ENCODE measurements at regions of chr1 and their contacts with region 1.

Region 1: GRCh38 chr1:87292684-87293493 is 35.8 kb upstream of the LMO4 start:
- DNase-seq: no peak
- H3K4me3 ChIP-seq: no peak overlapping the region
- H3K27ac ChIP-seq: no peak overlapping the region
- H3K4me1 ChIP-seq: no peaks in the 10 kb centered on the region
- H3K27me3 ChIP-seq: no peaks in the 10 kb centered on the region
- CTCF ChIP-seq: peak; percentile 64 to 79 (median 75)
- POLR2A ChIP-seq: no peak

Region 2: DNA sequence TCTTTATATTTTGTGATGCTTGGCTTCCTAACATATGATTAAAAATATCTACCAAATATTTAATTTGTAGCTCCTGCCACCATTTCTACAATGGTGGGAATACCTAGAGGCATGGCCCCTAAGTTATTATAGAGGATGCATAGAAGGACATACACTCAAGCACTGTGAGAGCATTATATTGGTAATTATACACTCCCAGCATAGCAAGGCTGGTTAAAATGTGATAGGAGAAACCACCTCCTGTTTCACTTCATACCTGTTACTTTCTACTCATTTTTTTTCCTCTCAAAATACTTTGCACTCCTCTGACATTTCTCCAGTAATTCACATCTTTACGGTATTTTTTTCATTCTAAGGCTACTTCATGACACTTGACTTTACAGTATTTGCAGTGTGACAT is 285.6 kb before region 1 on chr1:
- intact Hi-C with region 1: no loop called
- DNase-seq: no peak
- H3K4me3 ChIP-seq: no peak overlapping the region
- H3K27ac ChIP-seq: no peak overlapping the region
- H3K4me1 ChIP-seq: no peaks in the 10 kb centered on the region
- H3K27me3 ChIP-seq: no peaks in the 10 kb centered on the region
- CTCF ChIP-seq: no peak
- POLR2A ChIP-seq: no peak

Region 3: GRCh38 chr1:87592156-87592555 is 299.3 kb after region 1 on chr1:
- intact Hi-C with region 1: no loop called
- DNase-seq: no peak
- H3K4me3 ChIP-seq: no peak overlapping the region
- H3K27ac ChIP-seq: no peak overlapping the region
- H3K4me1 ChIP-seq: peaks cover 0 to 24% (median 7%) of the 10 kb centered on the region in 3 donors
- H3K27me3 ChIP-seq: no peaks in the 10 kb centered on the region
- CTCF ChIP-seq: no peak
- POLR2A ChIP-seq: no peak

Region 4: GRCh38 chr1:87730274-87731216 is 437.7 kb after region 1 on chr1:
- intact Hi-C with region 1: no loop called
- DNase-seq: no peak
- H3K4me3 ChIP-seq: no peak overlapping the region
- H3K27ac ChIP-seq: no peak overlapping the region
- H3K4me1 ChIP-seq: no peaks in the 10 kb centered on the region
- H3K27me3 ChIP-seq: no peaks in the 10 kb centered on the region
- CTCF ChIP-seq: no peak
- POLR2A ChIP-seq: no peak

Region 5: GRCh38 chr1:88302843-88303486 is 1010.1 kb after region 1 on chr1:
- intact Hi-C with region 1: loop called (anchors 5 kb)
- DNase-seq: no peak
- H3K4me3 ChIP-seq: no peak overlapping the region
- H3K27ac ChIP-seq: no peak overlapping the region
- H3K4me1 ChIP-seq: no peaks in the 10 kb centered on the region
- H3K27me3 ChIP-seq: no peaks in the 10 kb centered on the region
- CTCF ChIP-seq: peak in 5 of 6 experiments; percentile 29 to 61 (median 42)
- POLR2A ChIP-seq: no peak

Measured in esophagus squamous epithelium (tissue), 5 donors.